Activated B cell treated with CpG ODN at 0.5 μM for 24 hours (primary cell): ENCODE measurements at regions of chr3 and their contacts with region 1.

Region 1: DNA sequence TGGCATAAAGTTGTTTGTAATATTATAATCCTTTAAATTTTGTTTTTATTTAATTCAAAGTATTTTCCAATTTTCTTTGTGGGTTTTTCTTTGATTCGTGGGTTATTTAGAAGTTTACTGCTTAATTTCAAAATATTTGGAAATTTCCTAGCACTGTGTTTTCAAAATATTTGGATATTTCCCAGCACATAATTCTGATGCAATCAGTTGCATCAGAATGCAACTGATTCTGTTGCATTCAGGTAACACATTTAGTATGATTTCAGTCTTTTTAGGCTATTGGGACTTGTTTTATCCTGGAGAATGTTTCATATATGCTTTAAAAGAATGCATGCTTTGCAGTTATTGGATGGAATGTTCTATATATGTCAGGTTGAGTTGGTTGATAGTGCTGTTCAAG is 18.2 kb upstream of the PRR23C start:
- DNase-seq: no peak
- ATAC-seq: no peak
- H3K4me3 Mint-ChIP-seq: no peak overlapping the region
- H3K27ac Mint-ChIP-seq: no peak overlapping the region
- H3K4me1 Mint-ChIP-seq: no peaks in the 10 kb centered on the region
- H3K27me3 Mint-ChIP-seq: no peaks in the 10 kb centered on the region
- CTCF ChIP-seq: no peak

Region 2: DNA sequence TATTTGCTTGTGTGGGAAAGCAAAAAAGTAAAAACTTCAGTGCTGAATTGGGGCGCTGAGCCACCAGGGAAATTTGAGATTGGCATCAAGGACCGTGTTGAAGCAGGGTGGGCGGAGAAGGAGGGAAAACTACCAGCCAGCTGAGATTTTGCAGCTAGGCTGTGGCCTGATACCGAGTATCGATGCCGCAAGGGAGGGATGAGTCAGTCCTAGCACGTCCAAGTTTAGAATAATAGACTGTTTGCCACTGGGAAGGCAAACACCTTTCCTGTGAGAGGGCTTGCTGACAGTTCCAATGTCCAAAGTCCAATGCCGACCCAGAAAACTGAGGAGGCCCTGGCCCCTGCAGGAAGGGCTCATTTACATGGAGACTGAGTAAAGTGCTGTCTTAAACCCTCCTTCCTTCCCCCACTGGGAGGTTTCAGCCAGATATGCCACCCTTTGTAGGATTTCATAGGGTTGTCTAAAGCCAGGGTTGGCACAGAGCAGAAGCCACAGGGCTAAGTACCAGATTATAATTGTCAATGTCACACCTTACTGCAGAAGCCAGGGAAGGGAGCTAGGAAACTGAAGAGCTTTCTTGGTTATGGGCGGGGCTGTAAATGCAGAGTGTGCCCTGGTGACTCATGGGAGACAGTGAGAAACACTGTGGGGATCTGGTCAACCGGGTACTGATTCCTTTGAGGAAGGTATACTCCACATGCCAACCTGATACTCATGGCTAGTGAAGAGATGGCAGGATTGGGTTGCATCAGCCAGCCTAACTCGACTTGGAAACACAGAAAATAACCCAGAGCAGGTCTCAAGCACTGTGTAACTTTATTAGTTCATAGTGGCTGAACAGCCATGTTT is 199.8 kb before region 1 on chr3:
- CTCF ChIA-PET with region 1: no interaction called
- POLR2A ChIA-PET with region 1: no interaction called
- intact Hi-C with region 1: no loop called
- DNase-seq: no peak
- ATAC-seq: no peak
- H3K4me3 Mint-ChIP-seq: no peak overlapping the region
- H3K27ac Mint-ChIP-seq: no peak overlapping the region
- H3K4me1 Mint-ChIP-seq: no peaks in the 10 kb centered on the region
- H3K27me3 Mint-ChIP-seq: no peaks in the 10 kb centered on the region
- CTCF ChIP-seq: no peak

Region 3: GRCh38 chr3:139074565-139075115 is 11.7 kb after region 1 on chr3:
- CTCF ChIA-PET with region 1: no interaction called
- POLR2A ChIA-PET with region 1: no interaction called
- intact Hi-C with region 1: loop called (anchors 1 kb)
- DNase-seq: no peak
- ATAC-seq: no peak
- H3K4me3 Mint-ChIP-seq: no peak overlapping the region
- H3K27ac Mint-ChIP-seq: no peak overlapping the region
- H3K4me1 Mint-ChIP-seq: no peaks in the 10 kb centered on the region
- H3K27me3 Mint-ChIP-seq: peaks cover 5% of the 10 kb centered on the region
- CTCF ChIP-seq: no peak

Region 4: DNA sequence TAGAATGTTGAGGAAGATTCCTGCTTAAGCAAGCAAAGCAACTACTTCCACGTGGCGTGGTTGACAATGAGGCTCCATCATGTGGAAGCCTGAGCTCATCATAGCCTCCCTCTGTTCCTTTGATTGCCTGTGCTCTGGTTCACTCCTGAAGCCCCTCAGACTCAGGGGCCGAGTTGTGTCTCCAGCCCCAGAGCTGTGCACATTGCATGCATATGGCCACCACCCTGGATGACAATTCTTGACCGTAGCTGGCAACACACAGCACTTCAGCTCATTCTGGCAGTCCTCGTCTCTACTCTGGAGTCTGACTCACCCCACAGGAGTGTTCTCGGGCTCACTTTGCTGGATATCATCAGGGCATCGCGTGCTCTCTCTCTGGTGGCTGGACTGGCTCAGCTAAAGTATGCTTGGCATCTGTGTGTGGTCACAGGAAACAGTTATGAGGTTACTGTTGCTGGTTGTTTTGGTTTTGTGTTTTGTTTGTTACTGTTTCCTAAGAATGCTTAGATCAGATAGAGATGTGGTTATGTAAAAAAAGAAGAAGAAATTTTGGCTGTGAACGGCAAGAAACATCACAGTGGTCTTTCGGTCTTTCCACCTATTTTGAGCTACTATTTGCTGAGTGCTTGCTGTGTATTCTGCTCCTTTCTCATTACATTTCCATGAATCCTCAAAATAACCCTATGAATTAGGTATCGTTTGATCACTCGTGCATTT is 239.3 kb after region 1 on chr3:
- CTCF ChIA-PET with region 1: no interaction called
- POLR2A ChIA-PET with region 1: no interaction called
- intact Hi-C with region 1: no loop called
- DNase-seq: no peak
- ATAC-seq: no peak
- H3K4me3 Mint-ChIP-seq: no peak overlapping the region
- H3K27ac Mint-ChIP-seq: no peak overlapping the region
- H3K4me1 Mint-ChIP-seq: no peaks in the 10 kb centered on the region
- H3K27me3 Mint-ChIP-seq: no peaks in the 10 kb centered on the region
- CTCF ChIP-seq: no peak